OCI-LY7 (cell line): ENCODE measurements at regions of chr20 and their contacts with region 1.

Region 1: GRCh38 chr20:5788385-5788895 is 38.2 kb downstream of the SHLD1 start:
- DNase-seq: peak; percentile 96
- H3K4me3 ChIP-seq: no peak overlapping the region
- H3K27ac ChIP-seq: peak overlapping the region; percentile 51
- H3K4me1 ChIP-seq: peaks cover 65% of the 10 kb centered on the region
- CTCF ChIP-seq: peak; percentile 99

Region 2: DNA sequence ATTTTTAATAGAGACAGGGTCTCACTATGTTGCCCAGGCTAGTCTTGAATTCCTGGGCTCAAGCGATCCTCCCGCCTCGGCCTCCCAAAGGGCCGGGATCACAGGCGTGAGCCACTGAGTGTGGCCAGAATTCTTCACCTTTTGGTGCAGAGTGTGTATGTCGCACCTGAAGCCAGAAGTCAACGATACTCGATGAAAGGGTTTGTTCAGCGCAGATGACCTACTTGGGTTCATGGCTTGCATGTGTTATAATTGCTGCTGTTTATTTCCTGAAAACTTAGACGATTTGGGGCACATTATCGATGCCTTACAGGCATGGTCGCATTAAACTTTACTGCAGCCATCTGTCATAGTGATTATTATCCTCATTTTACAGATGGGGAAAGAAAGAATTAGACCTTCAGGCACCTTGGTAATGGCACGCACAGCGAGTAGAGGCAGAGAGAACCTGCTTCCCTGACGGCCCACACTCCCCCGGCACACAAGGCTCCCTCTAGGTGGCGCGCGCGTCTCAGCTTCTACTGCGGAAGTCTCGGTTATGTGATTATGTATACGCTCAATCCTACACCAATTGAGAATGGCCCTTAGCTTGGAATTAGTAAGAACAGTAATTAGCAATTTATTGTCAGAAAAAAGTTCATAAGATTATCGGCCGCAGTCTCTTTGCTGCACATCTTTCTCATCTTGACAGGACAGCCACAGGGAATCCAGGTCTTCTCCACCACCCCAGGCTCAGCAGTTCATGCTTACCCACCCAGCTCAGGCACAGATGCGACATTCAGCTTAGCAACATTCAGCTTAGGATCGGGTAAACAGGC is 258.9 kb before region 1 on chr20:
- CTCF ChIA-PET with region 1: interaction called, 5 read pairs
- POLR2A ChIA-PET with region 1: no interaction called
- intact Hi-C with region 1: loop called (anchors 1 kb)
- DNase-seq: peak; percentile 86
- H3K4me3 ChIP-seq: no peak overlapping the region
- H3K27ac ChIP-seq: no peak overlapping the region
- H3K4me1 ChIP-seq: peaks cover 6% of the 10 kb centered on the region
- CTCF ChIP-seq: peak; percentile 98

Region 3: GRCh38 chr20:5569021-5569420 is 219.4 kb before region 1 on chr20:
- CTCF ChIA-PET with region 1: no interaction called
- POLR2A ChIA-PET with region 1: interaction called, 6 read pairs
- intact Hi-C with region 1: loop called (anchors 1 kb)
- DNase-seq: peak; percentile 83
- H3K4me3 ChIP-seq: no peak overlapping the region
- H3K27ac ChIP-seq: peak overlapping the region; percentile 52
- H3K4me1 ChIP-seq: peaks cover 39% of the 10 kb centered on the region
- CTCF ChIP-seq: peak; percentile 94

Region 4: DNA sequence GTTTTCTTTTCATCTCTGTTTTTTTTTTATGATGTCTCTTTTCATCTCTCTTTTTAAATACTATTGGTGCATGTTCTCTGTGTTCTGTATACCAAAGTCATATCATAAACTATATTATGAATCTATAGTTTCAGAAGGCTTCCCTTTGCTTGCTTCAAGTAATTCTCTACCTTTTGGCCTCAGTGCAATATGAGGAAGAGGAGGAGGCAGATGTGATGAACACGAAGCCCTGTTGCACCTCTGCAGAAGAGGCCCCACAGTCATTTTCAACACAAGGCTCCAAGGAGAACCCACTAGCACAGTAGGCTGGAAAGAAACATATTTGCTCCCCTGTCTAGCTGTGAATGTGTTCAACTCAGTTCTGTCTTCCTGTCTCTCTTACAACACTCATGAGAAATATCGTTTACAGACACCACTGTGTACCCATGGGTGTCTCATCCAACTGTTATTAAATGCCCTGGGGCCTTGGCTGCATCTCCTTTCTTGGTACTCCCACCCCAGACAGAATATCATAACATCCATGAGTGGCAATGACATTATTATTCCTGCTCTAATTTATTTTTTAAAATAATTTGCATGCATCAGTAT is 160.9 kb before region 1 on chr20:
- CTCF ChIA-PET with region 1: no interaction called
- POLR2A ChIA-PET with region 1: no interaction called
- intact Hi-C with region 1: no loop called
- DNase-seq: no peak
- H3K4me3 ChIP-seq: no peak overlapping the region
- H3K27ac ChIP-seq: no peak overlapping the region
- H3K4me1 ChIP-seq: peaks cover 4% of the 10 kb centered on the region
- CTCF ChIP-seq: no peak

Region 5: GRCh38 chr20:5674176-5674660 is 114.2 kb before region 1 on chr20:
- CTCF ChIA-PET with region 1: no interaction called
- POLR2A ChIA-PET with region 1: interaction called, 4 read pairs
- intact Hi-C with region 1: loop called (anchors 1 kb)
- DNase-seq: peak; percentile 94
- H3K4me3 ChIP-seq: peak overlapping the region; percentile 61
- H3K27ac ChIP-seq: peak overlapping the region; percentile 94
- H3K4me1 ChIP-seq: peaks cover 99% of the 10 kb centered on the region
- CTCF ChIP-seq: 0 out of 2 replicates have a peak, but pooled peaks have one; percentile 30

Region 6: DNA sequence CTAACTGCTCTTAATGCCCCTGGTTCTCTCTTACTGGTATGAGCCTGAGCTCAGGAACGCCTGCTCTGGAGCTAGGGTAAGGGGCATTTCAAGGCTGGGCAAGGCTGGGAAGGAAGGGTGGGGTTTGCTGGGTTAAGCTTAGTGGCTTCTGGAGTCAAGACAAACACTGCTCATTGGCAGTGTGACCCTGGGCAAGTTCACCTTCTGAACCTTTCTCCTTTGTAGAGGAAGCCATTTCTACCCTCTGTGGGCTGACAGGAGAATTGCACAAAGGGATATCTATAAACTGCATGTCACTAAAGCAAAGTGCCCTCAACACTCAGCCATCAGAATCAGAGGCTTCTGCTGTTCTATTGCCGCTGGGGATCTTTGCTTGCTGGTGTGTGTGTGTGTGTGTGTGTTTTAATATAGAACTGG is 285.7 kb after region 1 on chr20:
- CTCF ChIA-PET with region 1: no interaction called
- POLR2A ChIA-PET with region 1: no interaction called
- intact Hi-C with region 1: loop called (anchors 5 kb)
- DNase-seq: peak; percentile 57
- H3K4me3 ChIP-seq: no peak overlapping the region
- H3K27ac ChIP-seq: no peak overlapping the region
- H3K4me1 ChIP-seq: no peaks in the 10 kb centered on the region
- CTCF ChIP-seq: peak; percentile 68

Region 7: DNA sequence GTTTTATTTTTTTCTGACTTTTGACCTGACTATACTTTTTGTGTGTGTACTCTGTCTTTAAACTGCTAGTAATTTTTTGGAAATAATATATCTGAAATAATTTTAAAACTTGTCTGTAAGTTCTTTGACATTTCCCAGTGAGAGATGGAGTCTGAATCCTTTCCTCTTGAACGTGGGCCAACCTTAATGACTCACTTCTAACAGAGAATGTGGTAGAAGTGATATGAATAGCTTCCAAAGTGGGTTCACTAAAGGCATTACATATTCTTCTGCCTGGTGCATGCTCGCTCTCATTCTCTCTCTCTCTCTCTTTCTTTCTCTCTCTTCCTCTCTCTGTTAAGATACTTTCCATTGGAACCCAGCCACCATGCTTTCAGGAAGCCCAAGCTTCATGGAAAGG is 443.1 kb after region 1 on chr20:
- CTCF ChIA-PET with region 1: no interaction called
- POLR2A ChIA-PET with region 1: no interaction called
- intact Hi-C with region 1: no loop called
- DNase-seq: no peak
- H3K4me3 ChIP-seq: no peak overlapping the region
- H3K27ac ChIP-seq: no peak overlapping the region
- H3K4me1 ChIP-seq: no peaks in the 10 kb centered on the region
- CTCF ChIP-seq: no peak